Calu3 (cell line): ENCODE measurements at regions of chr5 and their contacts with region 1.

Region 1: GRCh38 chr5:69024241-69024651 is 69.6 kb upstream of the SLC30A5 start:
- DNase-seq: peak; percentile 38
- H3K4me3 Mint-ChIP-seq: no peak overlapping the region
- H3K27ac Mint-ChIP-seq: peak overlapping the region; percentile 40
- H3K4me1 Mint-ChIP-seq: peaks cover 7% of the 10 kb centered on the region
- H3K27me3 Mint-ChIP-seq: peaks cover 10% of the 10 kb centered on the region
- CTCF ChIP-seq: peak; percentile 50

Region 2: GRCh38 chr5:68962757-68963484 is 61.3 kb before region 1 on chr5:
- CTCF ChIA-PET with region 1: no interaction called
- intact Hi-C with region 1: no loop called
- DNase-seq: peak; percentile 77
- H3K4me3 Mint-ChIP-seq: no peak overlapping the region
- H3K27ac Mint-ChIP-seq: no peak overlapping the region
- H3K4me1 Mint-ChIP-seq: peaks cover 8% of the 10 kb centered on the region
- H3K27me3 Mint-ChIP-seq: no peaks in the 10 kb centered on the region
- CTCF ChIP-seq: peak; percentile 71

Region 3: DNA sequence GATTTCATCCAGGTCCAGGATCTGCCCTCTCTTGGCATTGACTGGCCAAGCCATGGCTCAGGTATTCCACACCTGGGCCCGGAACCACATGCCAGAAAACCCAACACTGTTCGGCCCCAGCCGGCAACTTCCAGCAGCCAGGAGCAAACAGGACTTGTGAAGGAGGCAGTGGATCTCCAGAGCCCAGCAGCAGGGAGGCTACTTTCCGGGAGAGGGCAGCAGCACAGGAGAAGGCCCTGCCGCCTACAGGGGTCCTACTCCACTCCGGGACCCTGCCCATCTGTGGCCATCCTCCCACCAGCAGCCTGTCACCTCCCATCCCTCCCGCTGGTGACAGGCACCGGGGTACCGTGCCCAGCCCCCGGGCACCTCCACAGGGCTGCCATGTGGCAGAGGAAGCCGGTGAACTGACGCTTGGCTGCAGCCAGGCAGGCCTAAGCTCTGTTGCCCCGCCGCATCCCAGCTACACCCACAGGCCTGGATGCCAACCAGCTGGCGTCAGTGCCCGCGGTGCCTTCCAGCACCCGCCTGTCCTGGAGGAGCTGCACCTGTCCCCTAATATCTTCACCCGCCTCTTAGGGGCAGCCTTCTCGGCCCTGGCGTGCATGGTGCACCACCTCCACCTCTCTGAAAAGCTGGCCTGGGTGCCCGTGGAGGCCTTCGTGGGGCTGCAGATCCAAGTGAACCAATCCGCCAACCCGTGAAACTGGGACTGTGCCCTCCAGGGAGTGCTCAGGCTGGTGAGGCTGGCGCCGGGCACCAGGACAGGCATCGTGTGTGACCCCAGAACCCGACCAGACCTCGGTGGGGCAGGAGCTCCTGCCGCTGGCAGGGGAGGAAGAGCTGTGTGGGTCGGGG is 50.6 kb after region 1 on chr5:
- CTCF ChIA-PET with region 1: no interaction called
- intact Hi-C with region 1: loop called (anchors 10 kb)
- DNase-seq: peak; percentile 11
- H3K4me3 Mint-ChIP-seq: no peak overlapping the region
- H3K27ac Mint-ChIP-seq: no peak overlapping the region
- H3K4me1 Mint-ChIP-seq: peaks cover 30% of the 10 kb centered on the region
- H3K27me3 Mint-ChIP-seq: no peaks in the 10 kb centered on the region
- CTCF ChIP-seq: peak; percentile 18